ENCODE measurements at regions of chr10 and their contacts with region 1.

Region 1: DNA sequence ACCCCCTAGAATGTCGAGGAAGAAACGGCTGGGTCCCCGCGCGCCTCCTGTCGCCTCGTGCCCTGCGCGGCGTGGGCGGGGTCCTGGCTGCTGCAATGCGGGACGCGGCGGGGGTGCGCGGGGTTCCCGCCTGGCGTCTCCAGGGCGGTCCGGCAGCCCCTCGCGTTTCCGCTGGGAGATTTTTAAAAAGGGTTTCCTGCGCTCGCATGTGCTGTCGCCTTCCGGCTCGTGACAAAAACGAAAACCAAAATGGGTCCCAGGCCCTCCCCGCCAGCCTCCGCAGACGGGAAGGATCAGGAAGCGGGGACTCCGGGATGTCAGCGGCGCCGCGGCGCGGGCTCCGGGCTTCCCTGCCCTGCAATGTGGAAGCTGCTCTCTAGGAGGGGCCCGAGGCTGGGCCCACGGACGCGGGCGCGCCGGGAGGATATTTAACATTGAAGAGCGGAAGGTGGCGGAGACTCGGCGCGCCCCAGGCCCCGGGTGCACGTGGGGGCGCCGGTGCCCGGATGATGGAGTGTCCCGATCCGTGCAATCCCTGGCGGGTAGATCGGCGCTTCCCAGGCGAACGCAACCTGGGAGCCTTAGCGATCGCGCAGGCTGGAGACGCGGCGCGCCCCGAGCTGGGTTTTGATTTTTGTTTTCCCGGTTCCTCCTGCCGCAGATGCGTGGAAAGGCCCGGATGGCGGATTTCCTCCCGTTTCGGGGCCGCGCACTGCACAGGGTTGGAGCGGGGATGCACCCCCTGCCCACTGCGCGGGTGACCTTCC is 1.0 kb downstream of the PFKP start:
- DNase-seq: peak; percentile 60 to 71
- ATAC-seq: peak; percentile 15 to 53 (median 42)
- H3K4me3 ChIP-seq: peak overlapping the region; percentile 70 to 90 (median 87)
- H3K27ac ChIP-seq: peak overlapping the region; percentile 31 to 97 (median 90)
- H3K4me1 ChIP-seq: peaks cover 0 to 67% (median 32%) of the 10 kb centered on the region in 9 donors
- H3K27me3 ChIP-seq: peaks cover 0 to 22% (median 0%) of the 10 kb centered on the region in 7 donors
- CTCF ChIP-seq: peak in 7 of 9 donors; percentile 27 to 63 (median 42)

Region 2: GRCh38 chr10:2994221-2994961 is 74.0 kb before region 1 on chr10:
- intact Hi-C with region 1: no loop called
- DNase-seq: no peak
- ATAC-seq: no peak
- H3K4me3 ChIP-seq: no peak overlapping the region
- H3K27ac ChIP-seq: no peak overlapping the region
- H3K4me1 ChIP-seq: no peaks in the 10 kb centered on the region
- H3K27me3 ChIP-seq: peaks cover 0 to 10% (median 3%) of the 10 kb centered on the region in 7 donors
- CTCF ChIP-seq: no peak

Region 3: GRCh38 chr10:3099291-3100092 is 31.1 kb after region 1 on chr10:
- intact Hi-C with region 1: loop called in 1 of 10 experiments (anchors 5 kb)
- DNase-seq: no peak
- ATAC-seq: no peak
- H3K4me3 ChIP-seq: no peak overlapping the region
- H3K27ac ChIP-seq: peak overlapping the region in 1 of 10 donors; percentile 10
- H3K4me1 ChIP-seq: peaks cover 6 to 50% (median 38%) of the 10 kb centered on the region in 9 donors
- H3K27me3 ChIP-seq: no peaks in the 10 kb centered on the region
- CTCF ChIP-seq: no peak

Region 4: DNA sequence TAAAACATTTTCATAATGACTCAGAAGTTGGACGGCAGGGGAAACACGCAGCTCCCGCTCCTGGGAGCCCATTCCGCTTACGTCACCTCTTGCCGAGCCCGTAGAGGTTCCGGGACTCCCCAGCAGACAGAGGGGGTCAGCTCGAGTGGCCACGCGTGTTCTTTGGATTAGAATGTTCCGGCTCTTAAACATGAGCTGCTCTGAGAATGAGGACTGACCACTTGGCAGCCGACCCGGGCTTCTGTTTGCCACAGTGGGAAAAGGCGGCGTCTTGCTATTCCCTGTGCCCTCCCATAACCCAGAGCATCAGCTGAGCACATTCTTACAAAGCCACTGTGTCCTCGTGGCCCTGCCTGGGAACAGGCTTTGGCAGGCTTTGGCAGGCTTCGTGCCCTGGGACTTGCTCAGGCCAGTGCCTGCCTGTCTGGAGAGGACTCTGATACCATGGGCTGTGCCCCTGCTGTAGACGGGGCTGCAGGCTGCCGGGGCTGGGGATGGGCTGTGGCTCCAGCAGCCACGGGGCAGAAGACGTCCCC is 39.1 kb after region 1 on chr10:
- intact Hi-C with region 1: loop called in 5 of 10 experiments (anchors 5 kb)
- DNase-seq: peak; percentile 68 to 71
- ATAC-seq: peak; percentile 81 to 94 (median 88)
- H3K4me3 ChIP-seq: no peak overlapping the region
- H3K27ac ChIP-seq: peak overlapping the region; percentile 67 to 86 (median 80)
- H3K4me1 ChIP-seq: peaks cover 0 to 75% (median 39%) of the 10 kb centered on the region in 9 donors
- H3K27me3 ChIP-seq: no peaks in the 10 kb centered on the region
- CTCF ChIP-seq: no peak

Region 5: DNA sequence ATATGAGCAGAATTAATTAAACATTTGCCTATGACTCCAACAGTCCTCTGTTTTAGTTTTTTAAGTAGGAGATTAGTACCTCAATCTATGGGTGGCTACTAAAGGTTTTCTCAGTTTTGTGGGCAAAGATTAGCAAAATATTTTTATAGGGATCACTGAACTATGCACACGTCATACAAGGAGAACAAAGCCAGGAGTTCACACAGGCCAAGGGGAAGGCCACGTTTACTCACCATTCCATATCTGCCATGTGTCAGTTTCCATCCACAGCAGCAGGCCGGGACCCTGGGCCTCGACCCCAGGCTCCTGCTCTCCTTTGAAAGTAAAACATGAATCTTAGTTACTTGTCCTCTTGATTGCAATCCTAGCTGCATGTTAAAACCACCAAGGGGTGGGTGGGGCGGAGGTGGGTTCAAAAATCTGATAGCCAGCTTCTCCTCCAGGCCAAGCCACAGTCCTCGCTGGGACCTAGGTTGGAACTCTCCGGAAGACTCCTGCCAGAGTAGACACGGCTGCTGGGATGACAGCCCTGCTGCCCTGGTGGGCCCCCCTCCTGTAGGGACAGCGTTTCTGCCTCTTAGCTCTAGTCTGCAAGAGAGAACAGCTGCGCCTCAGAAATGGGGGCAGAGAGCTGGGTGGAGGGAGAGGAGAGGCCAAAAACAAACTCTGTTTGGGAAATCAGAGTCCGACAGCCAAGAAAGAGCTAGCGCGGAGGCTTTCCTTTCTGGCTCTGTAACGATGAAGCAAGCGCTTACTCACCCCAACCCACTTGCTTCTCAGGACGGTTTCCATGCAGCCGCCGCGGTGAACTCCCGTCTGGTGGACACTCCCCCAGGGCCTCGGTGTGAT is 68.6 kb after region 1 on chr10:
- intact Hi-C with region 1: loop called in 1 of 10 experiments (anchors 10 kb)
- DNase-seq: peak; percentile 56 to 63
- ATAC-seq: peak; percentile 71 to 89 (median 76)
- H3K4me3 ChIP-seq: no peak overlapping the region
- H3K27ac ChIP-seq: peak overlapping the region in 9 of 10 donors; percentile 1 to 70 (median 37)
- H3K4me1 ChIP-seq: peaks cover 0 to 42% (median 26%) of the 10 kb centered on the region in 9 donors
- H3K27me3 ChIP-seq: no peaks in the 10 kb centered on the region
- CTCF ChIP-seq: no peak

Region 6: GRCh38 chr10:4033341-4033896 is 965.0 kb after region 1 on chr10:
- intact Hi-C with region 1: no loop called
- DNase-seq: no peak
- ATAC-seq: peak in 2 of 8 donors; percentile 8 to 35
- H3K4me3 ChIP-seq: no peak overlapping the region
- H3K27ac ChIP-seq: peak overlapping the region in 1 of 10 donors; percentile 52
- H3K4me1 ChIP-seq: peaks cover 0 to 24% (median 0%) of the 10 kb centered on the region in 9 donors
- H3K27me3 ChIP-seq: no peaks in the 10 kb centered on the region
- CTCF ChIP-seq: no peak